A673 (cell line): ENCODE measurements at regions of chr7 and their contacts with region 1.

Region 1: DNA sequence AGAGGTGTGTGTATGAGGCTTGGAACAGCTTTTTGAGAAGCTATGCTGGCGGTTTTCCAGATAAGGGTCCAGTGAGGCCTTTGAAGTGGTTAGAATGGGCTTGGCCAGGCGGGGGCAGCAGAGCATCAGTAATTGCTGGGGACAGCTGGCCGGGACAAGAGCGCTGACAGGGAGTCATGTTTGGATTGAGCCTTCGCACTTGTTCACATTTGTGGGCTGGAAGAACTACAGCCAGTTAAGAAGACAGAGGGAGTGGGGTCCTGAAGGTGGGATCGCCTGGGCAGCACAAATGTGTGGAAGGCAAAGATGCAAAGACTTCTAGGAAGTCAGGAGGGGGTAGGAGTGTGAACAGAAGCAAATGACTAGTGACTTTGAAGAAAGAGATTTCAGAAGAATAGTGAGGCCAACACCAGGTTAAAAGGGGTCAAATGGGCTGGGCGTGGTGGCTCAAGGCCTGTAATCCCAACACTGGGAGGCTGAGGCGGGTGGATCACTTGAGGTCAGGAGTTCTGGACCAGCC is 12.7 kb upstream of the SDHAF3 start:
- DNase-seq: peak; percentile 82
- H3K4me3 ChIP-seq: no peak overlapping the region
- H3K27ac ChIP-seq: no peak overlapping the region
- H3K4me1 ChIP-seq: no peaks in the 10 kb centered on the region
- H3K27me3 ChIP-seq: no peaks in the 10 kb centered on the region
- CTCF ChIP-seq: peak; percentile 86

Region 2: GRCh38 chr7:97179454-97180104 is 74.8 kb after region 1 on chr7:
- CTCF ChIA-PET with region 1: interaction called, 7 read pairs
- POLR2A ChIA-PET with region 1: no interaction called
- intact Hi-C with region 1: loop called (anchors 1 kb)
- DNase-seq: peak; percentile 78
- H3K4me3 ChIP-seq: no peak overlapping the region
- H3K27ac ChIP-seq: no peak overlapping the region
- H3K4me1 ChIP-seq: no peaks in the 10 kb centered on the region
- H3K27me3 ChIP-seq: no peaks in the 10 kb centered on the region
- CTCF ChIP-seq: peak; percentile 82

Region 3: DNA sequence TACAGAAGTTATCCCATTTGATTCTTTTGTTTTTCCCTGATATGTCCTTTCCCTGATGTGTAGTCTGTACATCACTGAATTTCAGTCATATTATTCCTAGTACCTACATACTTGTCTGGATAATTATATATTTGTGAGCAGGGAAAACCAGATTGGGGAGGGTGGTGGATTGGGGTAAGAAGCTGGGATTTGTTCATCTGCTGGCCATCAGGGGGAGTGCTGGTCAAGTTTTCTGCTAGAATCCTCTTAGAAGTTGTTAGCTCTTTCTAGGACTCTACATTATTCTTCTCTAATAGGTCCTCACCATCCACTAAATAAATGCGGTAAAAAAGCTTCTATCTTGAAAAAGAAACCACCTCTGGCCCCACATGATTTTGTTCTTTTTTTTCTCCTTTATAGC is 394.4 kb after region 1 on chr7:
- CTCF ChIA-PET with region 1: no interaction called
- POLR2A ChIA-PET with region 1: interaction called, 11 read pairs
- intact Hi-C with region 1: no loop called
- DNase-seq: peak; percentile 42
- H3K4me3 ChIP-seq: no peak overlapping the region
- H3K27ac ChIP-seq: no peak overlapping the region
- H3K4me1 ChIP-seq: no peaks in the 10 kb centered on the region
- H3K27me3 ChIP-seq: no peaks in the 10 kb centered on the region
- CTCF ChIP-seq: peak; percentile 62

Region 4: GRCh38 chr7:97835296-97836138 is 730.7 kb after region 1 on chr7:
- CTCF ChIA-PET with region 1: interaction called, 3 read pairs
- POLR2A ChIA-PET with region 1: no interaction called
- intact Hi-C with region 1: loop called (anchors 2 kb)
- DNase-seq: peak; percentile 74
- H3K4me3 ChIP-seq: no peak overlapping the region
- H3K27ac ChIP-seq: no peak overlapping the region
- H3K4me1 ChIP-seq: no peaks in the 10 kb centered on the region
- H3K27me3 ChIP-seq: peaks cover 18% of the 10 kb centered on the region
- CTCF ChIP-seq: peak; percentile 80

Region 5: DNA sequence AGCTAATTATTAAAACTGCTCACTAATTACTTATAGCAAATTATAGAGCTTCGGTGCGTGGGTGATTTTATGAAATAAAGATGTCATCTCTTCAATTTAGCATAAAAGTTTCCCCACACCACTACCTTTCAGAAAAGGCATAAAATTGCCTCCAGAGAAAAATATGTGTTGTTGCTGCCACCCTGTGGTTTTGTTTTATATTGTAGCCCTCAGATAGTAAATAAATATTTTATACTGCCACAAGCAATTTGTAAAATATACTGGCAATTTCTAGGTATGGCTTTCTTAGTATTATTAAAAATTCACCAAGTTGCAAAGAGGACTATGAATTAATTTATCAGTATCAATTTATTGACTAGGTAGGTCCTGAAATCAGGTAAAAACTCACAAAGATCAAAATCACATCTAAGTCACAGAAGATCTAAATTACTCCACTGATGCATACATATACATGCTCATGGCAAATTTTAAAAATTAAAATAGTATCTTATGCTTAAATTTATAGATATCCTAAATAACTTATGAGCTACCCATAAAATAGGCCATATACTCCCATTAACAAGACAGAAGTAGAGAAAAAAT is 740.9 kb after region 1 on chr7:
- CTCF ChIA-PET with region 1: interaction called, 3 read pairs
- POLR2A ChIA-PET with region 1: no interaction called
- intact Hi-C with region 1: loop called (anchors 2 kb)
- DNase-seq: peak; percentile 52
- H3K4me3 ChIP-seq: no peak overlapping the region
- H3K27ac ChIP-seq: no peak overlapping the region
- H3K4me1 ChIP-seq: no peaks in the 10 kb centered on the region
- H3K27me3 ChIP-seq: no peaks in the 10 kb centered on the region
- CTCF ChIP-seq: peak; percentile 58